Activated CD4-positive, alpha-beta T cell treated with anti-CD3 and anti-CD28 coated beads for 36 hours (primary cell): ENCODE measurements at regions of chr1 and their contacts with region 1.

Region 1: DNA sequence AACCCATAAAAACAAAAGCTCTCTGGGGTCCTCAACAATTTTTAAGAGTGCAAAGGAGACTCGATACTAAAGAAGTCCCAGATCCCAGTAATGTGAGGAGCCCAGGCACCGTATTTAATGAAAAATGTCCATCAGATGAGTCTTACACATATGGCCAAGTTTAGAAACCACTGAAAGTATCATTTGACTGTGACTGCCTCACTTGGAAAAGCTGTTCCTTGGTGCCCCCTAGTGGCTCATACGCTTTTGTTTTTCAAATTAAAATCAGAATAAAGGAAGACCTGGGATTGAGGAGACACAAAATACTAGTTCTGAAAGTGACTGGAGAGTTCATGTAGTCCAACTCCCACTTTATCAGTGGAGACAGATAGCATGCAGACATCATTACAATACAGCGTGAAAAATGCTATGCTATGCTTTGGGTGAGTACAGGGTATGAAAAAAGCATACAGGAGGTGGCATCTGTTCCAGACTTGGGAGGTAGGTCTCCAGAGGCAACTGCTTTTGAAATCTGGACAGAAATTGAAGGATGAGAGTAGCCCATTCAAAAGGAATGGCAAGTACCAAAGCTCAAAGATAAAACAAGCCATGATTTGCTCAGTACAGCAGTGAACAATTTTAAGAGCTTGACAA is 33.8 kb downstream of the GDAP2 start:
- DNase-seq: peak; percentile 77
- ATAC-seq: peak; percentile 91
- H3K4me3 Mint-ChIP-seq: no peak overlapping the region
- H3K27ac Mint-ChIP-seq: no peak overlapping the region
- H3K4me1 Mint-ChIP-seq: peaks cover 4% of the 10 kb centered on the region
- H3K27me3 Mint-ChIP-seq: no peaks in the 10 kb centered on the region

Region 2: DNA sequence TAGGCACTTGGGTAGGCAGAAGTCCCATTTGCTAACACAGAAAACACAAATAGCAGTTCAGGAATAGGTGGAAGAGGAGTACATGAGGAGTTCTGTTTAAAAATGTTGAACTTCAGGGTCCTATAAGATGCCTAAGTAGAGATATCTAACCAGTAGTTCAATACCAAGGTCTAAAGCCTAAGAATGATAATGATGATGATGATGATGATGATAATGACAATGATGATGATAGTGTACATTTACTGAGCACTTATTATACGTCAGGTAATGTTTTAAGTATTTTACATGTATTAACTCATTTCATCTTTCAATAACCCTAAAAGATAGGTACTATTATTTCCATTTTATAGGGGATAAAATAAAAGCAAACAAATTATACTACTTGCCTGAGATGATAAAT is 16.3 kb before region 1 on chr1:
- CTCF ChIA-PET with region 1: interaction called, 14 read pairs
- POLR2A ChIA-PET with region 1: no interaction called
- intact Hi-C with region 1: no loop called
- DNase-seq: no peak
- ATAC-seq: no peak
- H3K4me3 Mint-ChIP-seq: no peak overlapping the region
- H3K27ac Mint-ChIP-seq: no peak overlapping the region
- H3K4me1 Mint-ChIP-seq: no peaks in the 10 kb centered on the region
- H3K27me3 Mint-ChIP-seq: no peaks in the 10 kb centered on the region

Region 3: GRCh38 chr1:117929173-117929989 is 33.8 kb after region 1 on chr1 and contains the starts of genes GDAP2 and WDR3:
- CTCF ChIA-PET with region 1: interaction called, 13 read pairs
- POLR2A ChIA-PET with region 1: no interaction called
- intact Hi-C with region 1: no loop called
- DNase-seq: peak; percentile 98
- ATAC-seq: peak; percentile 97
- H3K4me3 Mint-ChIP-seq: peak within 1 kb of the TSS; percentile 94
- H3K27ac Mint-ChIP-seq: peak within 1 kb of the TSS; percentile 90
- H3K4me1 Mint-ChIP-seq: peaks cover 54% of the 10 kb centered on the region
- H3K27me3 Mint-ChIP-seq: no peaks in the 10 kb centered on the region
- total RNA-seq, gene GDAP2: 18.8 to 20.9 TPM
- total RNA-seq, gene WDR3: 45.0 to 63.7 TPM

Region 4: GRCh38 chr1:118021668-118022067 is 126.1 kb after region 1 on chr1:
- CTCF ChIA-PET with region 1: no interaction called
- POLR2A ChIA-PET with region 1: no interaction called
- intact Hi-C with region 1: no loop called
- DNase-seq: no peak
- ATAC-seq: no peak
- H3K4me3 Mint-ChIP-seq: no peak overlapping the region
- H3K27ac Mint-ChIP-seq: no peak overlapping the region
- H3K4me1 Mint-ChIP-seq: no peaks in the 10 kb centered on the region
- H3K27me3 Mint-ChIP-seq: peaks cover 9% of the 10 kb centered on the region